Activated T-helper 1 cell treated with anti-CD3 and anti-CD28 coated beads, Interleukin-12 subunit alpha, Interleukin-12 subunit beta, Interleukin-2, Interleukin-4 antibody, amounts not matched to agents 30 ng/mL and 10 ng/mL and 1 ng/mL, durations not matched to agents 14 hours and 24 hours and 36 hours (primary cell): ENCODE measurements at regions of chr19 and their contacts with region 1.

Region 1: DNA sequence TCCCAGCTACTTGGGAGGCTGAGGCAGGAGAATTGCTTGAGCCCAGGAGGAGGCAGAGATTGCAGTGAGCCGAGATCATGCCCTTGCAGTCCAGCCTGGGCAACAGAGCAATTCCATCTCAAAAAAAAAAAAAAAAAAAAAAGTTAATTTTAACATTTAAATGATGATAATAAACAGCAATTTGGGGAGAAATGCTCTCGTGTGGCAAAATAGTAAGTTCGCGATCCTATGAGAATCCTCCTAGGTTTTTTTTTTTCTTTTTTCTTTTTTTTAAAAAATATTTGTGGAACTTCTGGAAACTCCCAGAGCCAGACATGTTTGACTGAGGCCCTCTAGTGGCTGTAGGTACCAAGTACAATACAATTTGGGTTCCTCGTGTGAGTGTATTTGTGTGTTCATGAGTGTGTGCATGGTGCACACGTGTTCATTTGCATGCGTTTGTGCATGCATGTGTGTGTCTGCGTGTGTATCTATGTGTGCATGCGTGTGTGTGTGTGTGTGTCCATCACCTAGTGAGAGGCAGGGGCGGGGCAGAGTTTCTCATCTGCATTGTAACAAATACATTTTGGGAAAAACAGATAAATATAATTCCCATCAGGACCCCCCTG is 31.2 kb downstream of the TMPRSS9 start:
- DNase-seq: peak; percentile 29
- H3K4me3 Mint-ChIP-seq: no peak overlapping the region
- H3K27ac Mint-ChIP-seq: no peak overlapping the region
- H3K4me1 Mint-ChIP-seq: peaks cover 5% of the 10 kb centered on the region
- H3K27me3 Mint-ChIP-seq: peaks cover 2% of the 10 kb centered on the region

Region 2: DNA sequence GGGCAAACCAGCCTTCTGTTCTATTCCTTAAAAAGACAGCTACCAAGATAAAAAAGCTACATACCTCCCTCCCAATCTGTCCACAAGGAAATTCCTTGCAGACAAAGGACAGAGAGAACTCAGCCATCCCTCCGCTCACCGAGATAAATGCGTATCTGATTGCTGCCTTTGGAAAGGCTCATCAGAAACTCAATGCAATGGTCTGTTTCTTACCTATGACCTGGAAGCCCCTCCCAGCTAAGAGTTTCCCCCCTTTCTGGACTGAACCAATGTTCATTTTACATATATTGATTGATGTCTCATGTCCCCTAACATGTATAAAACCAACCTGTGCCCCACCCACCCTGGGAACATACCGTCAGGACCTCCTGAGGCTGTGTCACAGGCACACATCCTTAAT is 387.3 kb before region 1 on chr19:
- intact Hi-C with region 1: no loop called
- DNase-seq: no peak
- H3K4me3 Mint-ChIP-seq: no peak overlapping the region
- H3K27ac Mint-ChIP-seq: no peak overlapping the region
- H3K4me1 Mint-ChIP-seq: no peaks in the 10 kb centered on the region
- H3K27me3 Mint-ChIP-seq: no peaks in the 10 kb centered on the region

Region 3: DNA sequence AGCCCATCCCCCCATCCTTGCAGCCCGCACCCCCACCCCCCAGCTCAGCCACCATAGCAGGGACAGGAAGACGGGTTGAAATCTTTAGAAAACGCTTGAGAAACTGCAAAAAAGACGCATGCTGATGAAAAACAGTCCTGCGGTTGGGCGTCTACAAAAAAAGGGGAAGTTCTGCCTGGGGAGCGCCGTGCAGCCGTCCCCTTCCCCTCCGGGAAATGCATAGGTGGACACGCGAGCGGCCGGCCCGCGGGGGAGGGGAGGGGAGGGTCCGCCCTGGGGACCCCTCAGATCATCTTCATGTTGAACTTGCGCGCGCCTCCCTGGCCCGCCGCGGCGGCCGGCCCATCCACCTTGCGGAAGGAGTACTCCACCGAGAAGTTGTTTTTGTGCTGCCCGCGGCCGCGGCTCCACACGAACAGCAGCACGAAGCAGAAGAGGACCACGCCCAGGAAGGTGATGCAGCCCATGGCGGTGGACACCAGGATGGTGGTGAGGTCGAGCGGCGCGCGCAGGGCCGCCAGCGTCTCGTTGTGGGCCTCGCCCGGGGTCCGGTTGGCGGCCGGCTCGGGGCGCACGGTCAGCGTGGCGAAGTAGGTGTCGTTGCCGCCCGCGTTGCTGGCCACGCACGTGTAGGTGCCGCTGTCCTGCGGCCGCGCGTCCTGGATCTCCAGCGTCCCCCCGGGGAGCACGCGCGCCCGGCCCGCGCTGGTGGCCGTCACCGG is 101.3 kb before region 1 on chr19:
- intact Hi-C with region 1: loop called (anchors 5 kb)
- DNase-seq: peak; percentile 68
- H3K4me3 Mint-ChIP-seq: peak overlapping the region; percentile 86
- H3K27ac Mint-ChIP-seq: peak overlapping the region; percentile 90
- H3K4me1 Mint-ChIP-seq: peaks cover 18% of the 10 kb centered on the region
- H3K27me3 Mint-ChIP-seq: peaks cover 3% of the 10 kb centered on the region

Region 4: GRCh38 chr19:2328401-2329148 is 62.6 kb before region 1 on chr19 and contains the starts of genes LSM7 and SPPL2B:
- intact Hi-C with region 1: loop called (anchors 2 kb)
- DNase-seq: peak; percentile 91
- H3K4me3 Mint-ChIP-seq: peak within 1 kb of the TSS; percentile 100
- H3K27ac Mint-ChIP-seq: peak within 1 kb of the TSS; percentile 100
- H3K4me1 Mint-ChIP-seq: peaks cover 63% of the 10 kb centered on the region
- H3K27me3 Mint-ChIP-seq: no peaks in the 10 kb centered on the region
- total RNA-seq, gene LSM7: 180 and 193 TPM in 2 replicates
- total RNA-seq, gene SPPL2B: 71.2 and 71.4 TPM in 2 replicates